ENCODE measurements at regions of chr1 and their contacts with region 1.

Region 1: DNA sequence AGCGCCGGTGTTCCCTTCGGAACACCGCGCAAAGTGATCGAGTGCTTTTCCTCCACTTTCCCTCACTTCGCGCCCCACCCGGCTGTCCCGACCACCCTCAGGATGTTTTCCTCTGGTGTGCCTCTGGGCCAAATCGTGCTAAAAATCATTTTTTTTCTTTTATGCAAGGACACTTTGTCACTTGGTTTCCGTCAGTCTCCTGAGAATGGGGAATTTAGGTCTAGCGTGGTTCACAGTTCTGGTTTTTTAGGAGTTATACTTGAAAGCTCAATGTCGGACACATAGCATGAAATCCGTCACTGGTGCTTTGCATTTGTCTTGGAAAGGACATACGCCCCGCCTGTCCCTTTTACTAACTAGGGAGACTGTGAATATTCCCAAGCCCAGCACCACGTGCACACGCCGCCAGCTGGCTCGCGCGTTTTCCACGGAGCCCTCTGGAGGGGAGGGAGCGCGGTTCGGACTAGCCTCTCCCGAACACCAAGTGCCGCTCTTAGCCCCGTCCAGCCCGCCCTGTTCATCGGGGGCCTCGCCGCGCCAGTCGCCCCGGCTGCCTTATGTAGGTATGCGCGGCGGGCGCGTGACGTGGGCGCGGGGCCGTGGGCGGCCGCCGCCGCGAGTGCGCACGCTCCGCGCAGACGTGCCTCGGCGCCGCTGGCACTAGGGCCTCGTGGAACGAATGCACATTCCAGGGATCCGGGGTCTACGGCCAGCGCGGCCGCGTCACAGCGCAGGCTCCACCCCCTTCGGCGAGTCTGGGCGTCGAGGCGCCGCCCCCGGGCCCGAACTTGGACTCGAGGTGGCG is 572 bp upstream of the IRF2BP2 start:
- DNase-seq: peak; percentile 90
- ATAC-seq: peak; percentile 56
- H3K4me3 ChIP-seq: peak overlapping the region; percentile 35 to 71 (median 40)
- H3K27ac ChIP-seq: peak overlapping the region; percentile 99
- H3K4me1 ChIP-seq: peaks cover 47% of the 10 kb centered on the region
- H3K27me3 ChIP-seq: no peaks in the 10 kb centered on the region; a peak in 2 of 5 replicates
- CTCF ChIP-seq: peak; percentile 31
- EP300 ChIP-seq: 0 out of 4 replicates have a peak, but pooled peaks of 1 of the 2 experiments have one; percentile 16
- POLR2A ChIP-seq: peak in 1 of 2 experiments; percentile 82; a peak in 2 of 4 replicates
- RAD21 ChIP-seq: peak; percentile 7; the same call in 1 of the 2 replicates

Region 2: GRCh38 chr1:234125283-234125682 is 485.3 kb before region 1 on chr1:
- CTCF ChIA-PET with region 1: no interaction called
- POLR2A ChIA-PET with region 1: no interaction called
- in situ Hi-C with region 1: no loop called
- intact Hi-C with region 1: no loop called
- DNase-seq: peak; percentile 59
- ATAC-seq: peak; percentile 99
- H3K4me3 ChIP-seq: no peak overlapping the region; a peak in 1 of 6 replicates
- H3K27ac ChIP-seq: no peak overlapping the region
- H3K4me1 ChIP-seq: no peaks in the 10 kb centered on the region
- H3K27me3 ChIP-seq: peaks cover 0 to 4% of the 10 kb centered on the region in 2 experiments; a peak in 1 of 5 replicates
- CTCF ChIP-seq: peak; percentile 88
- EP300 ChIP-seq: no peak
- POLR2A ChIP-seq: no peak
- RAD21 ChIP-seq: peak; percentile 53; the same call in 1 of the 2 replicates

Region 3: DNA sequence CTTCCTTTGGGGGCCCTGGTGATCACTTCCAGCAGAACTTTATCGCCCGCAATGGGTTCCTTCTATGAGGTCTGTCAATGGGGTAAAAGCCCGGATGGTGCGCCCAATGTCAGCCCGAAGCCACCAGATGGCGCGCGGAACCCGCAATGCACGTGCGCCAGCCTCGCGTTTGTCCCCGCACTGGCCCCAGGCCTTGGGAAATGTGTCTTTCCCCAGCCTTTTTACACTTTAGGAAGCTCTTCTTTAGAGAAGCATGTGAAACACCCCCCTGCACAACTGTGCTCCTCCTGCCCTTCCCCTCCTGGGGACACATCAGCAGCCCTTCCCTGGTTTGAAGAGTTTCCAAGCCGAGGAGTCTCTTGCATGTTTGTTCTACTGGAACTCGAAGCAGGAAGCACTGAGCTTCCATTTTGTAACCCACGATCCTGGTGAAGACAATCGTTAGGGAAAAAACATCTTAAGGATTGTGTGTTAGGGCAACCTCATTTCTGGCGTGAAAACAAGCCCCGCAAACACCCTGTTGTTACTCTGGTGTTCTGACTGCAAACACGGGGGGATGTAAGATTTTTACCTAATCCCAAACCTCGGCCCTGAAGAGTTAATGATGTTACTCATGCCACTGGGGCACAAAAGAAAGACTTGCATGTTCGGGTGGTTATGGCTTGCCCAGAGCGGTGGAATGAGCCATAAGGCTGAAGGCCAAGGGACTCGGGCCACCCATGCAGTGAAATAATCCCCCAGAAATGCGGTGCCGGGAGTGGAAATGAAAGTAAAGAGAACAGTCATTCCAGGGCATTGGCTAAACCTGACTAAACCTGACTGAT is 111.2 kb before region 1 on chr1:
- CTCF ChIA-PET with region 1: no interaction called
- POLR2A ChIA-PET with region 1: interaction called, 22 read pairs
- in situ Hi-C with region 1: no loop called
- intact Hi-C with region 1: loop called (anchors 1 kb)
- DNase-seq: peak; percentile 65
- ATAC-seq: peak; percentile 99
- H3K4me3 ChIP-seq: 0 out of 6 replicates have a peak overlapping the region, but pooled peaks of 1 of the 3 experiments have one; percentile 8
- H3K27ac ChIP-seq: peak overlapping the region; percentile 50
- H3K4me1 ChIP-seq: peaks cover 61% of the 10 kb centered on the region
- H3K27me3 ChIP-seq: no peaks in the 10 kb centered on the region
- CTCF ChIP-seq: peak; percentile 97
- EP300 ChIP-seq: no peak
- POLR2A ChIP-seq: no peak
- RAD21 ChIP-seq: peak; percentile 99

Region 4: DNA sequence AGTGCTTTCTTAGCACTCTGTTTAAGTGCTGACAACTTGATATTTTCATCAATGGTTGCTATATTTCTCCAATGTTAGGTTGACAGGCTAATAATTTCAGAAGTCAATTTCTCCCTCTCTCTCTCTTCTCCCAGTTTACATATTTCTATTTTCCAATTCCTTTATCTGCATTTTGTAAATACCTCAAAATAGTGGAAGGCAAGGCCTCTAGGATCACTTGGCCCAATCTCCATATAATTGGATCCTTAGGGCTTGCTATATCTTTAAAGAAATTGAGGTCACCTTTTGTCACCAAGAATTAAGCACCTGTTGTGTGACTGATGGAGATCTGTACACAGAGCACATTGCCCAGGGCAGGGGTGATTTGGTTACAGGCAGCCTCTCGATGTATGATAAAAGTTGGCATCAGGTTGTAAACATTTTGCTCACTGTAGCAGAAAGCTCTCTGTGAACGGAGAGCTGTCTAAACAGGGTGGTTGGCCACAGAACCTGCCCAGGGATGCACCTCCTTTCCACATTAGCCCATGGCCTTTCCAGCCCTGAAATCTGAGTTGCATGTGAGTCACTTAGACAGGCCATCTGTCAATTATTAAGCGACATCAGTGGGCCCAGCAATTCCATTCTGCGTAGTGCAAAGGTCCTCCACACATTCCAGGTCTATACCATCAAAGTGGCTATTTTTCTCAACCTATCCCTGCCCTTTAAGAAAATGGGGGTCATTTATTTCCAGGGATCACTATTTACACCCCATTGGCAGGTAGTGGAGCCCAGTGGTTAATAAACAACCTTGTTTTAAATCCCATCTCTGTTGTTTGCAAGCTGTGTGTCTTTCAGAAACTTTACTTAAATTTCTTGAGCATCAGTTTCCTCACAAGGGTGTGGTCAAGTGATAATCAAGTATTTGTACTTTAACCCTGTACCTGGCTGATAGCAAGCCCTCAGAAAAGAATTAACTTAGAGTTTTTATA is 28.6 kb after region 1 on chr1:
- CTCF ChIA-PET with region 1: no interaction called
- POLR2A ChIA-PET with region 1: interaction called, 106 read pairs
- in situ Hi-C with region 1: no loop called
- intact Hi-C with region 1: loop called (anchors 1 kb)
- DNase-seq: peak; percentile 98
- ATAC-seq: peak; percentile 87
- H3K4me3 ChIP-seq: peak overlapping the region in 1 of 3 experiments; percentile 13; a peak in 1 of 6 replicates
- H3K27ac ChIP-seq: peak overlapping the region; percentile 84
- H3K4me1 ChIP-seq: peaks cover 81% of the 10 kb centered on the region
- H3K27me3 ChIP-seq: no peaks in the 10 kb centered on the region
- CTCF ChIP-seq: 0 out of 2 replicates have a peak, but pooled peaks have one; percentile 2
- EP300 ChIP-seq: peak in 1 of 2 experiments; percentile 92; a peak in 2 of 4 replicates
- POLR2A ChIP-seq: peak; percentile 44 to 73; a peak in 3 of 4 replicates
- RAD21 ChIP-seq: peak; percentile 50; the same call in 1 of the 2 replicates

Region 5: DNA sequence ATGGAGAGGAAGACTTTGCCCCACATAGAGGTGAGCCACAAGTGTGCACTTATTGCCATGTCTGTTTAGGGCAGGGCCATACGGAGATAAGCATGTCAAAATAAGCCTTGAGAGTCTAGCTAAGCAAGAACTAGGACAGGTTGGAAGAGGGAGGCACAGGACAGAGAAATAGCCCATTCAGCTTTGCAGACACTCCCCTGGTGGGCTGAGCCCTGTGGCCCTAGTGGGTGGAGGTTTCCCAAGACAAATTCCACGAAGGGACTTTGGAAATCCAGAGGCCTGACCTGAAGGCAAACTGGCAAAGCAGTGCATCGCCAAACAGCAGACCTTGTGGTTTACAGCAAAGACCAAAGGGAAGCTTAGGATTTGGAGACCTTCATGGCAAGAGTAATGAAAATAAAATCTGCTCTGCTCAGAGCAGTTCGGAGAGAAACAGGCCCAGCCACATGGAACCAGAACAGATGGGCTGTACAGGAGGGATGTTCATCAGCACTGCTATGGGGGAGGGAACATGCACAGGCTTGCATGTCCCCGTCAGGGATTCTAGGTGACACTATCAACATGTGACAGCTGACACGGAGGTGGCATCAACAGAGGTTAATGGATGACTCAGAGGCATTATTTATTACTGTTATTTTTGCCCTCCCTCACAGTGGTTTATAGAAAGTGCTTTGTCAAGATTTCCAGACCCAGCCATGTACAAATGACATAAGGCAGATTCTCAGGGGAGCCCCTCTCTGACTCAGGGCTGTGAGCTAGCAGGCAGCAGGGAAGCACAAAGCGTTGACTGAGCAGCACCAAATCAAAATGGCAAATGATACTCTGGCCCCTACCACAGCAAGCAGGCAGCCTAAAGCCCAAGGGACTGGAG is 89.5 kb after region 1 on chr1:
- CTCF ChIA-PET with region 1: no interaction called
- POLR2A ChIA-PET with region 1: interaction called, 11 read pairs
- in situ Hi-C with region 1: no loop called
- intact Hi-C with region 1: no loop called
- DNase-seq: no peak
- ATAC-seq: peak; percentile 73
- H3K4me3 ChIP-seq: no peak overlapping the region
- H3K27ac ChIP-seq: peak overlapping the region; percentile 21
- H3K4me1 ChIP-seq: peaks cover 29% of the 10 kb centered on the region
- H3K27me3 ChIP-seq: no peaks in the 10 kb centered on the region
- CTCF ChIP-seq: no peak
- EP300 ChIP-seq: no peak
- POLR2A ChIP-seq: no peak
- RAD21 ChIP-seq: no peak

Region 6: GRCh38 chr1:234755449-234755863 is 144.9 kb after region 1 on chr1:
- CTCF ChIA-PET with region 1: no interaction called
- POLR2A ChIA-PET with region 1: interaction called, 28 read pairs
- in situ Hi-C with region 1: no loop called
- intact Hi-C with region 1: no loop called
- DNase-seq: no peak
- ATAC-seq: no peak
- H3K4me3 ChIP-seq: no peak overlapping the region
- H3K27ac ChIP-seq: no peak overlapping the region
- H3K4me1 ChIP-seq: peaks cover 55% of the 10 kb centered on the region
- H3K27me3 ChIP-seq: no peaks in the 10 kb centered on the region
- CTCF ChIP-seq: no peak
- EP300 ChIP-seq: no peak
- POLR2A ChIP-seq: no peak
- RAD21 ChIP-seq: no peak

Region 7: DNA sequence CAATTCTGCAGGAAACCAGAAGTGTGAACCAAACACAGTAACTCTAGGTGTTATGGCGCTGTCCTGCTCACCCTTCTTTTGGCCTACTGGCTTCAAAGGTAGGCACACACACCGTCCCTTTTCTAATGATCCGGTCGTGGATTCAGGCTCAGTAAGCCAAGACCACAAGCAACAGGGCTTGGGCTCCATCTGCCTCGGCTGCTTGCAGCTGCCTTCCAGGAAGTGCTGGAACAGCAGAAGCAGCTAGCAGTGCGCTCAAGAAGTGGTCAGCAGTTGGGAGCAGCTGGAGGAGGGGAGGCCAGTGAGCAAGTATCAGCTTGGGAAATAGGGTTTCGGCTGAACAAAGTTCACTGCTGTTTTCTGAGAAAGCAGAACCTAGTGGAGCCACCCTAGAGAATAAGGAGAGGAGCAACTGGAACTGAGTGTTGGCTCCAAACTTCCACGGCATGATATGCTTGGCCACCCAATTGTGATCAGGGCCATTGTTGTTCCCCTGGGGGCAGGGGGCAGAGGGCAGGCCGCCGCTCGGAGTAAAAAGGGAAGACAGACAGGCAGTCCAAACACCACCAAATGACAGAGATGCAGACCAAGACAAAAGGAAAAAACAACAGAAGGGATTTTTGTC is 344.7 kb after region 1 on chr1:
- CTCF ChIA-PET with region 1: no interaction called
- POLR2A ChIA-PET with region 1: interaction called, 119 read pairs
- in situ Hi-C with region 1: loop called (anchors 5 kb)
- intact Hi-C with region 1: loop called (anchors 1 kb)
- DNase-seq: no peak
- ATAC-seq: peak; percentile 2; the same call in 1 of the 3 replicates
- H3K4me3 ChIP-seq: peak overlapping the region in 1 of 3 experiments; percentile 5; a peak in 1 of 6 replicates
- H3K27ac ChIP-seq: peak overlapping the region; percentile 100
- H3K4me1 ChIP-seq: peaks cover 85% of the 10 kb centered on the region
- H3K27me3 ChIP-seq: no peaks in the 10 kb centered on the region
- CTCF ChIP-seq: peak; percentile 5; the same call in 1 of the 2 replicates
- EP300 ChIP-seq: no peak; a peak in 1 of 4 replicates
- POLR2A ChIP-seq: 0 out of 4 replicates have a peak, but pooled peaks of 1 of the 2 experiments have one; percentile 36
- RAD21 ChIP-seq: 0 out of 2 replicates have a peak, but pooled peaks have one; percentile 10

Region 8: GRCh38 chr1:235075188-235075926 is 464.8 kb after region 1 on chr1:
- CTCF ChIA-PET with region 1: no interaction called
- POLR2A ChIA-PET with region 1: interaction called, 199 read pairs
- in situ Hi-C with region 1: loop called (anchors 5 kb)
- intact Hi-C with region 1: no loop called
- DNase-seq: peak; percentile 89
- ATAC-seq: peak; percentile 57
- H3K4me3 ChIP-seq: peak overlapping the region; percentile 56 to 82 (median 58)
- H3K27ac ChIP-seq: peak overlapping the region; percentile 99
- H3K4me1 ChIP-seq: peaks cover 91% of the 10 kb centered on the region
- H3K27me3 ChIP-seq: no peaks in the 10 kb centered on the region; a peak in 1 of 5 replicates
- CTCF ChIP-seq: no peak
- EP300 ChIP-seq: peak in 1 of 2 experiments; percentile 59; a peak in 2 of 4 replicates
- POLR2A ChIP-seq: peak in 1 of 2 experiments; percentile 80; a peak in 2 of 4 replicates
- RAD21 ChIP-seq: no peak

Measured in HepG2 (cell line).